MCF 10A (cell line): ENCODE measurements at regions of chr3 and their contacts with region 1.

Region 1: GRCh38 chr3:146065573-146066006 is 95.4 kb downstream of the PLOD2 start:
- DNase-seq: peak; percentile 69
- H3K4me3 Mint-ChIP-seq: no peak overlapping the region
- H3K27ac Mint-ChIP-seq: no peak overlapping the region
- H3K4me1 Mint-ChIP-seq: peaks cover 9% of the 10 kb centered on the region
- H3K27me3 Mint-ChIP-seq: no peaks in the 10 kb centered on the region
- CTCF ChIP-seq: peak; percentile 72

Region 2: DNA sequence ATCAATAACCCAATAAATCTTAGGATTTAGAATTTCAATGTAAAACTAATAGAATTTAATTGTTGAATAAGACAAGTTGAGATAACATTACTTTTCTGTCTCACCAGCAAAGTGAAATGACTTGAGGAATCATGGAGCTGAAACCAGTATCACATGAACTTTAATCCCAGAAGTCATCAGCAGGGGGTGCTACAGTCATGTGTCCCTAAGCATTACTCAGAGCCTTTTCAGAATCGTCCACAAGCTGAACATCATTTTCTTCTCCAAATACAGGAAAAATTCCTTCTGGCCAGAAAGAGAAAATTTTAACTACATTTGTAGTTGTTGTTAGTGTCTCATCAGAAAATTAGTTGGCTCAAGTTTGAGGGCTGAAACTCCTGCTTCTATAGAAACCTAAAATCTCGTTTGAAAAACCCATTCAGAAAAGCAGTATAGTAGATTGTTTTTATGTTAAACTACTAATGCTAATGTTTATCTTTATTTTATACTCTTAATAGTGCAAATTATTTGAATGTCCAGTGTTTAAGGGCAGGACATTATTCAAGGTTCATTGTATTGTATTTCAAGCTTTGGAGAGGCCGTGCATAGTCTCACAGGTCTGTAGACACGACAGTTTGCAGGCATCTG is 288.7 kb before region 1 on chr3:
- CTCF ChIA-PET with region 1: interaction called, 6 read pairs
- POLR2A ChIA-PET with region 1: no interaction called
- intact Hi-C with region 1: loop called (anchors 1 kb)
- DNase-seq: peak; percentile 78
- H3K4me3 Mint-ChIP-seq: no peak overlapping the region
- H3K27ac Mint-ChIP-seq: no peak overlapping the region
- H3K4me1 Mint-ChIP-seq: no peaks in the 10 kb centered on the region
- H3K27me3 Mint-ChIP-seq: peaks cover 68% of the 10 kb centered on the region
- CTCF ChIP-seq: peak; percentile 78

Region 3: DNA sequence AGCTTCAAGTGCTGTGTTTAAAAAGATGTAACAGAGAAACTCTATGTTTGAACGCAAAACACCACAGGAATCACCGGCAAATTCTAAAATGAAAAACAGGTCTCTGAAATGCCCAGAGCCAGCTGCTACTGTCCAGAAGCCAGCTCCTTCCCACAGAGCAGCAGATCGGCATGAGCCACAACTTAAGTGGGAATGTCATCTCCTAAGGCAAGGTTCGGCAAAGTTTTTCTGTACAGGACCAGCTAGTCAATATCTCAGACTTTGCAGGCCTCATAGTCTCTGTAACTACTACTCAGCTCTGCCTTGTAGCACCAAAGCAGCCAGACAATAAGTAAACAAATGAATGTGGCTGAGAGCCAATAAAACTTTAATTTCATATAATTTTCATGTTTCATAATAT is 90.5 kb after region 1 on chr3:
- CTCF ChIA-PET with region 1: interaction called, 27 read pairs
- POLR2A ChIA-PET with region 1: interaction called, 15 read pairs
- intact Hi-C with region 1: loop called (anchors 1 kb)
- DNase-seq: peak; percentile 47
- H3K4me3 Mint-ChIP-seq: peak overlapping the region; percentile 86
- H3K27ac Mint-ChIP-seq: peak overlapping the region; percentile 86
- H3K4me1 Mint-ChIP-seq: peaks cover 21% of the 10 kb centered on the region
- H3K27me3 Mint-ChIP-seq: no peaks in the 10 kb centered on the region
- CTCF ChIP-seq: no peak

Region 4: GRCh38 chr3:146166450-146167225 is 101.0 kb after region 1 on chr3:
- CTCF ChIA-PET with region 1: interaction called, 27 read pairs
- POLR2A ChIA-PET with region 1: interaction called, 15 read pairs
- intact Hi-C with region 1: no loop called
- DNase-seq: peak; percentile 89
- H3K4me3 Mint-ChIP-seq: peak overlapping the region; percentile 15
- H3K27ac Mint-ChIP-seq: peak overlapping the region; percentile 65
- H3K4me1 Mint-ChIP-seq: peaks cover 46% of the 10 kb centered on the region
- H3K27me3 Mint-ChIP-seq: no peaks in the 10 kb centered on the region
- CTCF ChIP-seq: no peak

Region 5: DNA sequence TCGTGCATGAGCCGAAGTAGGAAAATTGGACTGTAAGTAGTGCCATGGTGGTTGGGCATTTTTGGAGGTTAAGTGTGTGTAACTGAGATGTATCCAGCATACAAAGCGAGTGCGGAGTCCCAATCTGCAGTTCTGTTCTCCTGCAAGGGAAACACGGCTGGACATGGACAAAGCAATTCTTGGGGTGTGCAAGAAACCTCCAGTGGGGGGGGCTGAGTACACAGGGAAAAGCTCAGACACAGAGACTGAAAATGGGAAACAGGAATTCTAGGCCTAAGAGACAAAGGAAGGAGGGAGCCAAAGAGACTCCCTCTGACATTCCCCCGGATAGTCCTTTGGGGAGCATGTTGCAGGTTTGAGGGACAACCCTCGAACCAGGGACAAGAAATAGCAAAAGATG is 268.6 kb after region 1 on chr3:
- CTCF ChIA-PET with region 1: interaction called, 11 read pairs
- POLR2A ChIA-PET with region 1: no interaction called
- intact Hi-C with region 1: loop called (anchors 5 kb)
- DNase-seq: peak; percentile 45
- H3K4me3 Mint-ChIP-seq: no peak overlapping the region
- H3K27ac Mint-ChIP-seq: no peak overlapping the region
- H3K4me1 Mint-ChIP-seq: no peaks in the 10 kb centered on the region
- H3K27me3 Mint-ChIP-seq: no peaks in the 10 kb centered on the region
- CTCF ChIP-seq: peak; percentile 23